WTC11 (cell line): ENCODE measurements at regions of chr10 and their contacts with region 1.

Region 1: GRCh38 chr10:45464958-45465567 is 91.0 kb downstream of the ALOX5 start:
- DNase-seq: peak; percentile 81
- ATAC-seq: peak; percentile 94
- H3K4me3 Mint-ChIP-seq: no peak overlapping the region
- H3K27ac Mint-ChIP-seq: peak overlapping the region; percentile 65; the same call in 1 of the 2 replicates
- H3K4me1 Mint-ChIP-seq: peaks cover 20% of the 10 kb centered on the region
- H3K27me3 Mint-ChIP-seq: no peaks in the 10 kb centered on the region
- CTCF ChIP-seq: peak; percentile 90

Region 2: DNA sequence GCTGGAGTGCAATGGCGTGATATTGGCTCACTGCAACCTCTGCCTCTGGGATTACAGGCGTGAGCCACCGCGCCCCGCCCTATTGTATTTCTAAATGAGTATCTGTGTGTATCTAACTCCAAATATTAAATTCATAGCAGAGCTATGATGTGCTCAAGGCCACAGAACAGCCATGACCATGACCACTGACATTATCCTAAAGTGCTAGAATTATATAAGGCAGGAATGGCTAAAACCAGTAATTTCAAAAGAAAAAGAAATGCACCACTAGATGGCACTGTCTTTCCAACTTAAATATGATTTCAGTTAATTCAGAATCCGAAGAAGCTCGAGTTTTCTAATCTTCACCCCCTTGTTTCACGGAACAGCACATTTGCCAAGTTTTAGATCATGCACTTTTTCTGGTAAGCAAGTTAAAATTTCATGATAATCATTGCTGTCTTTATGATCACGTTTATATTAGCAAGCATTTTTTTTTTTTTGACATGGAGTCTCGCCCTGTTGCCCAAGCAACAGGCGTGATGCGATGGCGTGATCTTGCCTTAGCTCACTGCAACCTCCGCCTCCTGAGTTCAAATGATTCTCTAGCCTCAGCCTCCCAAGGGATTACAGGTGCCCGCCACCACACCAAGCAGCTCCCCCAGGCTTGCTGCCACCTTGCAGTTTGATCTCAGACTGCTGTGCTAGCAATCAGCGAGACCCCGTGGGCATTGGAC is 214.9 kb before region 1 on chr10:
- CTCF ChIA-PET with region 1: interaction called, 22 read pairs
- POLR2A ChIA-PET with region 1: no interaction called
- DNase-seq: no peak
- ATAC-seq: peak; percentile 78
- H3K4me3 Mint-ChIP-seq: peak overlapping the region; percentile 73
- H3K27ac Mint-ChIP-seq: peak overlapping the region; percentile 92
- H3K4me1 Mint-ChIP-seq: peaks cover 3% of the 10 kb centered on the region; the same call in 1 of the 2 replicates
- H3K27me3 Mint-ChIP-seq: peaks cover 14% of the 10 kb centered on the region
- CTCF ChIP-seq: peak; percentile 62

Region 3: GRCh38 chr10:45453639-45454255 is 11.3 kb before region 1 on chr10:
- CTCF ChIA-PET with region 1: interaction called, 10 read pairs
- POLR2A ChIA-PET with region 1: no interaction called
- DNase-seq: no peak
- ATAC-seq: 0 out of 2 replicates have a peak, but pooled peaks have one; percentile 22
- H3K4me3 Mint-ChIP-seq: no peak overlapping the region
- H3K27ac Mint-ChIP-seq: no peak overlapping the region
- H3K4me1 Mint-ChIP-seq: no peaks in the 10 kb centered on the region
- H3K27me3 Mint-ChIP-seq: no peaks in the 10 kb centered on the region
- CTCF ChIP-seq: no peak

Region 4: GRCh38 chr10:45514291-45515270 is 49.5 kb after region 1 on chr10:
- CTCF ChIA-PET with region 1: no interaction called
- POLR2A ChIA-PET with region 1: no interaction called
- DNase-seq: no peak
- ATAC-seq: peak; percentile 51
- H3K4me3 Mint-ChIP-seq: no peak overlapping the region
- H3K27ac Mint-ChIP-seq: peak overlapping the region; percentile 57
- H3K4me1 Mint-ChIP-seq: peaks cover 21% of the 10 kb centered on the region
- H3K27me3 Mint-ChIP-seq: no peaks in the 10 kb centered on the region
- CTCF ChIP-seq: no peak

Region 5: DNA sequence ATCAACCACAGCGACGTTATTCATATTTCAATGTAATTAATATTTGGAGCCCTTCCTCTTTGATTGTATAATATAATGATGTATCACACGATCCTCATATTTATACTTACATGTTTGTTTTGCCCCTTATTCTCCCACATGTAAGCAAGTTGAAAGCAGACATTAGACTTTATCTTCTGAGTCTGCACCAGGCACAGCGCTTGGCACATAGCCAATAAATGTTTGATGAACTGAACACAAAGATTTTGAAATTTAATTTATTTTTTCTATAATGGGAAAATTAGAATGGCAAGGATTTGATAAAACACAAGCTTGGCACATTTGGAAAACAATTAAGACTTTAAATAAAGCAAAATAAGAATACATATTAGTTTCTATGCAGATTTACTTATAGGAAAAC is 175.9 kb after region 1 on chr10:
- CTCF ChIA-PET with region 1: no interaction called
- POLR2A ChIA-PET with region 1: no interaction called
- DNase-seq: no peak
- ATAC-seq: no peak
- H3K4me3 Mint-ChIP-seq: no peak overlapping the region
- H3K27ac Mint-ChIP-seq: no peak overlapping the region
- H3K4me1 Mint-ChIP-seq: no peaks in the 10 kb centered on the region
- H3K27me3 Mint-ChIP-seq: no peaks in the 10 kb centered on the region
- CTCF ChIP-seq: no peak

Region 6: DNA sequence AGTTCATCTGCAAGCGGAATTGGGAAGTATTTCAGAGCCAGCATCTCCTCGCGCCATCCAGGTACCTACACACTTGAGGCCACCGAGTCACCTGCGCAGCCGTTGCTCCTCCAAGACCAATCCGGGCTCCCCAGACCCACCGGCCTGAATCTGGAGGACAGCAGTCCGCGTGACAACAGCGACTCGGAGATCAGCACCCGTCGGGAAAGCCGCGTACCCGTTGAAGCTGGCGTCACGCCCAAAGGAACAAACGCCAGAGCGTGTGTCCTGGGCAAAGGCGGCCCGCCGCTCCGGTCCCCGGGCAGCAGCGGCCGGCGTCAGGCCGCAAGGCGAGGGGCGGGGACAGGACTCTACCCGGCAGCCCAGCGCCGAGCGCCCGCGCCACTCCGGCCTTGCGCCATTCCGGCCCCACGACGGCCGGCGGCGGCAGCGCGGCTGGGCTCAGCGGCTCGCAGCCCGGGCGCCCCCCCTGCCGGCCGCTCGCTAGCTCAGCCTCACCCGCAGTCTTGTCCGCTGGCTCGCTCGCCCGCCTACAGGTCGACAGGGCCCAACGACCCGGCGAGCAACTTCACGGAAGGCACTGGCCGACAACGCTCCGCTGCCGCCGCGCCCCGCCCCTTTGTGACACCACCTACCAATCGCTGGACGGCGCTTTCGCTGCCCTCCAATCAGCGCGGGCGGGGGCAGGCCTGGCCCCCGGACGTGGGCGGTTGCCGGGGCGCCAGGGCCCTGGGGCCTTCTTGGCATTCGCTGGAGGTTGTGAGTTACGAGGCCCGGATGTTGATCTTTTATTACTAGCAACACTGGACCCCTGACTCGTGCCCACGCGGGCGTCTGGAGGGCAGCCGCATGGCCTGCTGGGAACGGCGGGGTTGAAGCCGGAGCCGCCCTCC is 207.4 kb after region 1 on chr10 and contains the start of gene ZFAND4:
- CTCF ChIA-PET with region 1: interaction called, 27 read pairs
- POLR2A ChIA-PET with region 1: no interaction called
- DNase-seq: peak; percentile 98
- ATAC-seq: peak; percentile 95
- H3K4me3 Mint-ChIP-seq: peak within 1 kb of the TSS; percentile 92
- H3K27ac Mint-ChIP-seq: peak within 1 kb of the TSS; percentile 97
- H3K4me1 Mint-ChIP-seq: peaks cover 22% of the 10 kb centered on the region
- H3K27me3 Mint-ChIP-seq: no peaks in the 10 kb centered on the region
- CTCF ChIP-seq: peak; percentile 37; the same call in 1 of the 2 replicates
- total RNA-seq, gene ZFAND4: 18.3 to 18.4 TPM (median 18.3 TPM) in 3 replicates

Region 7: DNA sequence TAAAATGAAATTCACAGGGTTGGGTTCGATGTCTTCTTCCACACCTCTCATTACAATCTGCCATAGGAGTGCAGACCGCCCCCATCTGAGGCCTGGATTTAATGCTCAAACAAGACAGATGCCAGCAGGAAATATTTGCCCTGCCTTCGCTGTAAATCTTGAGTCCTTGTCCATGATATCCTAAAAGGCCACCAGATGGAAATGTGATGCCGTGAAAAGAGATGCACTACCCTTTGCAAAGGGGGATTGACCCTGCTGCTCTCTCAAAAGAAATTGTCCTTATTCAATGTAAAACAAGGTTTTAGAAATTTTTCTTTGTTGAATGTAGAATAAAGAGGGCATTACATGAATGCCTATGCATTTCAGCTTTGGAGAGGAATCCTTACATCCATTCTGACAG is 344.8 kb after region 1 on chr10:
- CTCF ChIA-PET with region 1: interaction called, 10 read pairs
- POLR2A ChIA-PET with region 1: no interaction called
- DNase-seq: peak; percentile 15
- ATAC-seq: no peak; the same call in 1 of the 2 replicates
- H3K4me3 Mint-ChIP-seq: no peak overlapping the region
- H3K27ac Mint-ChIP-seq: no peak overlapping the region
- H3K4me1 Mint-ChIP-seq: peaks cover 8% of the 10 kb centered on the region
- H3K27me3 Mint-ChIP-seq: no peaks in the 10 kb centered on the region
- CTCF ChIP-seq: no peak